GM12878 (cell line): ENCODE measurements at regions of chr9 and their contacts with region 1.

Region 1: DNA sequence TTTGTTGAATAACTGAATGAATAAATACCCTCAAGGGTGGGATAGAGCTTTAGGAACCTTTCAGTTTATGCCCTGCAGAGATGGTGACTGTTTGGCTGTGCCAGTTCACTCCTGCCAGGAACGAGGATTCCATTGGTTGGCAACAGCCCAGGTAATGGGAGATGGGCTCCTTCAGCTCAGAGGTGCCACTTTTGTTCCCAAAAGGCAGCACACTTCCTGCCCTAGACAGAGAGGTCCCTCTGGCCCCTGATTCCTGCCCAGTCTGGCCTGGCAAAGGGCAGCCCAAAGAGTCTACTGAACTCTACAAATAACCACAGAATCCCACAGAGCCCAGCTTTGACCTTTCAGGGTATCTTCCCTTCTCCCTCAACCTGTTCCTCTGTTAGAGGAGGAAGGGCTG is 1.6 kb downstream of the C9orf152 start:
- DNase-seq: no peak
- ATAC-seq: no peak
- H3K4me3 ChIP-seq: no peak overlapping the region
- H3K27ac ChIP-seq: no peak overlapping the region
- H3K4me1 ChIP-seq: no peaks in the 10 kb centered on the region
- H3K27me3 ChIP-seq: no peaks in the 10 kb centered on the region; a peak in 1 of 4 replicates
- CTCF ChIP-seq: no peak
- EP300 ChIP-seq: no peak
- POLR2A ChIP-seq: no peak
- RAD21 ChIP-seq: no peak

Region 2: DNA sequence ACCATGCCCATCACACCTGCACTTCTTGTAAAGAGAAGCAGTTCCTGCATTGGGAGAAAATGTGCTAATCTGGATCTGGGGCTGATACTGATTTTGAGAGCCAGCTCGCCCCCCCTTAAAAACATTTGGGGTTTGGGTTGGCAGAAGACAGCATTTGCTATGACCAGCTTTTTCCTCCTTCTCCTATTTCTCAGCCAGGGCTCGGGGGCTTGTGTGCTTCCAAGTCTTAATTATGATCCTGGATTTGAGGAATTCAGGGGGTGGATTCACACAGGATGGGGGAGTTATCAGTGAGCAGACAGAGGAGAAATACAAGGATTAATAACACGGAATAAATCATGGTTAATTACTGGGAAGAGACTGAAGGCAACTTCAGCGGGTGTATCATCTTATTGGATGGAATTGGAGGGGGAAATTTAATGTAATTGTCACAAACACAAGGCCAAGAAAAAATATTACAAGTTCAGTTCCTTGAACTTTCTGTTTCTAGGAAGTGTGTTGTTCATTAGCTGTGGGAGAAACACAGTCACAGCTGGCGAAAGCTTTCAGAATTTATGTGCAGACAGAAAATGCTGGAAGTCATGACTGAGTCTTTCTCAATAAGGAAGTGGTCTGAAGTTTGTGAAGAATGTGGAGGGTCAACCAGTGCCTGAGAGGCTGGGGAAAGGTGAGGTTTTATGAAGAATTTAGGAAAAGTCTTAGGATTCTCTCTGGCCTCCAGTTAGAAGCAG is 13.7 kb before region 1 on chr9:
- CTCF ChIA-PET with region 1: no interaction called
- POLR2A ChIA-PET with region 1: interaction called, 10 read pairs
- RAD21 ChIA-PET with region 1: no interaction called
- SMC1A ChIA-PET with region 1: interaction called, 3 read pairs
- in situ Hi-C with region 1: no loop called
- intact Hi-C with region 1: no loop called
- DNase-seq: no peak
- ATAC-seq: no peak
- H3K4me3 ChIP-seq: no peak overlapping the region
- H3K27ac ChIP-seq: no peak overlapping the region
- H3K4me1 ChIP-seq: no peaks in the 10 kb centered on the region
- H3K27me3 ChIP-seq: no peaks in the 10 kb centered on the region
- CTCF ChIP-seq: no peak
- EP300 ChIP-seq: no peak
- POLR2A ChIP-seq: no peak
- RAD21 ChIP-seq: no peak

Region 3: GRCh38 chr9:110276781-110277180 is 70.4 kb after region 1 on chr9:
- CTCF ChIA-PET with region 1: no interaction called
- POLR2A ChIA-PET with region 1: no interaction called
- RAD21 ChIA-PET with region 1: no interaction called
- SMC1A ChIA-PET with region 1: no interaction called
- in situ Hi-C with region 1: no loop called
- intact Hi-C with region 1: no loop called
- DNase-seq: no peak
- ATAC-seq: no peak
- H3K4me3 ChIP-seq: no peak overlapping the region
- H3K27ac ChIP-seq: no peak overlapping the region
- H3K4me1 ChIP-seq: no peaks in the 10 kb centered on the region
- H3K27me3 ChIP-seq: no peaks in the 10 kb centered on the region; a peak in 1 of 4 replicates
- CTCF ChIP-seq: no peak
- EP300 ChIP-seq: no peak
- POLR2A ChIP-seq: no peak
- RAD21 ChIP-seq: no peak